Mammary epithelial cell (primary cell): ENCODE measurements at regions of chr1 and their contacts with region 1.

Region 1: GRCh38 chr1:44739361-44740178 is at the start of gene KIF2C:
- DNase-seq: peak; percentile 95
- H3K4me3 ChIP-seq: peak within 1 kb of the TSS; percentile 63 to 88 (median 83)
- H3K27ac ChIP-seq: peak within 1 kb of the TSS; percentile 64
- H3K4me1 ChIP-seq: peaks cover 12% of the 10 kb centered on the region
- H3K27me3 ChIP-seq: no peaks in the 10 kb centered on the region
- CTCF ChIP-seq: no peak
- total RNA-seq, gene KIF2C: 1.0 to 29.8 TPM

Region 2: GRCh38 chr1:44721485-44722361 is 17.8 kb before region 1 on chr1:
- CTCF ChIA-PET with region 1: interaction called, 10 read pairs
- dilution Hi-C with region 1: no loop called
- in situ Hi-C with region 1: no loop called
- intact Hi-C with region 1: no loop called
- DNase-seq: peak; percentile 73
- H3K4me3 ChIP-seq: no peak overlapping the region
- H3K27ac ChIP-seq: peak overlapping the region; percentile 36
- H3K4me1 ChIP-seq: peaks cover 2% of the 10 kb centered on the region
- H3K27me3 ChIP-seq: no peaks in the 10 kb centered on the region
- CTCF ChIP-seq: no peak

Region 3: DNA sequence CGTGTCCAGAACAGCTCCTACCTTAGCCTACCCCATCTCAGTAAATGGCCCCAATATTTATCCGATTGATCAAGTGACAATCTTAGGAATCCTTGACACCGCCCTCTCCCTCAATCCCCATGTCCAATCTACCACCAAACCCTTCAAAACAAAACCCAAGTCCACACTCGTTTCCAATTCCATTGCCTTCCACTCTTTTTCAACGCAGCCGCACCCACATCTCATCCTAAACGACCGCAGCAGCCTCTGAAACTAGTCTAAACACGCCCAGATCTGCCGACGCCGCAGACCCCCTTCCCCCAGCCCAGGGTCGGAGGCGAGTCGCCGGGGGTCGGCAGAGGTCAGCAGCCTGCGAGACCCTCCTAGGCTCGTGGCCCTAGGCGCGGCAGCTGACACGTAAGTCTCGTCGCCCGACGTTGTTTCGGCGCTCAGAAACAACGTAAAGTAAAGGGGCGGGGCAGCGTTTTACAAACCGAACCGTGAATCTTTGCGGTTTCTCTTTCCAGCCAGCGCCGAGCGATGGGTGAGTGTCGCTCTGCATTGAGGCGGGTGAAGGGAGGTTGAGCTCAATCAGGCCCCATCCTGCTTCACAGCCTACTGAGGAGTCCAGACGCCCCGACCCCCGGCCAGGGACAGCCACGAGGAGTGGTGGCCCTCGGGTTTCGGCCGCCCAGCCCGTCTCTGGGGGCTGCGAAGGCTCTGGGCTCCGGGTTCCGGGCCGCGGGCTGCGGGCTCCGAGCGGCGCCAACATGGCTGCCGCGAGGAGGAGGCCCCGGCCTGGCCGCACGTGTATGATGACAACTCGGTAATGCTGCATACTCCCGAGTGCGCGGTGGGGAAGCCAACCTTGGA is 35.7 kb after region 1 on chr1 and contains the start of gene RPS8:
- CTCF ChIA-PET with region 1: no interaction called
- dilution Hi-C with region 1: loop called (anchors 5 kb)
- in situ Hi-C with region 1: no loop called
- intact Hi-C with region 1: loop called (anchors 2 kb)
- DNase-seq: peak; percentile 92
- H3K4me3 ChIP-seq: peak within 1 kb of the TSS; percentile 83 to 92 (median 86)
- H3K27ac ChIP-seq: peak within 1 kb of the TSS; percentile 98
- H3K4me1 ChIP-seq: peaks cover 15% of the 10 kb centered on the region
- H3K27me3 ChIP-seq: no peaks in the 10 kb centered on the region
- CTCF ChIP-seq: no peak
- total RNA-seq, gene RPS8: 1,053 to 1,537 TPM

Region 4: GRCh38 chr1:44807262-44808062 is 67.9 kb after region 1 on chr1 and contains the start of gene DYNLT4:
- CTCF ChIA-PET with region 1: no interaction called
- dilution Hi-C with region 1: no loop called
- in situ Hi-C with region 1: no loop called
- intact Hi-C with region 1: loop called (anchors 2 kb)
- DNase-seq: peak; percentile 99
- H3K4me3 ChIP-seq: no peak within 1 kb of the TSS
- H3K27ac ChIP-seq: peak within 1 kb of the TSS; percentile 97
- H3K4me1 ChIP-seq: peaks cover 81% of the 10 kb centered on the region
- H3K27me3 ChIP-seq: no peaks in the 10 kb centered on the region
- CTCF ChIP-seq: no peak
- total RNA-seq, gene DYNLT4: not detected